ENCODE measurements at regions of chr7 and their contacts with region 1.

Region 1: GRCh38 chr7:134432296-134433152 is 26.4 kb downstream of the AKR1B1 start:
- DNase-seq: peak; percentile 83
- H3K4me3 ChIP-seq: peak overlapping the region; percentile 46
- H3K27ac ChIP-seq: peak overlapping the region; percentile 82
- H3K27me3 ChIP-seq: peaks cover 3% of the 10 kb centered on the region
- CTCF ChIP-seq: peak; percentile 74

Region 2: GRCh38 chr7:133853706-133854276 is 578.7 kb before region 1 on chr7:
- CTCF ChIA-PET with region 1: no interaction called
- POLR2A ChIA-PET with region 1: no interaction called
- DNase-seq: peak; percentile 61
- H3K4me3 ChIP-seq: no peak overlapping the region
- H3K27ac ChIP-seq: peak overlapping the region; percentile 85
- H3K27me3 ChIP-seq: no peaks in the 10 kb centered on the region
- CTCF ChIP-seq: peak; percentile 51

Region 3: DNA sequence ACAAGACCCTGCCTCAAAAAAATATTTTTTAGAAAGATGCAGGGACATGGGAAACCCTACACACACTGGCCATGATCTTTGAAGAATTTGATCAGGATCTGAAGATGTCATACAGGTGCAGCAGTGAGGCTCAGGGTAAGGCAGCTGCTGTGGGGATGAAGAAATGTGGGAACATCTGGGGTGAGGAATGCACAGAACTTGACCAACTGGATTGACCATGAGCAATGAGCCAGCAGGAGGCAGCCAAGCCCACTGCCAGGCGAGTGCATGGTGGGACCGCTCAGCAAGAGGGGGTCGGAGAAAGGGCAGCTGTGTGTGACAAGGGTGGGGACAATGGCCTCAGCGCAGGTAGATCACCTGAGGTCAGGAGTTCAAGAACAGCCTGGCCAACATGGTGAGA is 28.8 kb before region 1 on chr7:
- CTCF ChIA-PET with region 1: no interaction called
- POLR2A ChIA-PET with region 1: no interaction called
- DNase-seq: no peak
- H3K4me3 ChIP-seq: no peak overlapping the region
- H3K27ac ChIP-seq: no peak overlapping the region
- H3K27me3 ChIP-seq: peaks cover 2% of the 10 kb centered on the region
- CTCF ChIP-seq: no peak

Region 4: DNA sequence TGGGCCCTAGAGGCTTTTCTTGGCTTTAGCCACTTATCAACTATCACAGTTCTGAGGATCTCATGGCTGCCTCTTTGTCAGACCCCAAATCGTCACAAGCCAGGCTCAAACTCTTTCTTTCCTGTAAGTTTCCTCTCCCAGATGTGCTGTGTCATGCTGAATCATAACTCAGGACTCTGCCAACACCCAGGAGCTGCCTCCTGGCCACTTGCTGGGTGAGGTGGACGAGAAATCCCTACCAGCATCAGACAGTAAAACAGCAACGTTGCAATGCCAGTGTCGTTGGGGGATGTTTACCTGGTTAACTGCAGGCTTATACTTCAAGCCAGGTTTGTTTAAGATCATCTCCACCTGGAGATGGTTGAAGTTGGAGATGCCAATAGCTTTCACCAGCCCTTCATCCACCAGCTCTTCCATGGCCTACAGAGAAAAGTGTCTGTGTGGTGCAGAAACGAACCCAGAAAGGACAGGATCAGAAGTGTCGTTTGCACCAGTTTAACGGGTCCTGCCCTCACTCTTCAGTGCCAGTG is 16.2 kb after region 1 on chr7:
- CTCF ChIA-PET with region 1: interaction called, 40 read pairs
- POLR2A ChIA-PET with region 1: interaction called, 7 read pairs
- DNase-seq: peak; percentile 74
- H3K4me3 ChIP-seq: no peak overlapping the region
- H3K27ac ChIP-seq: peak overlapping the region; percentile 93
- H3K27me3 ChIP-seq: no peaks in the 10 kb centered on the region
- CTCF ChIP-seq: no peak

Region 5: GRCh38 chr7:134473861-134474291 is 41.4 kb after region 1 on chr7:
- CTCF ChIA-PET with region 1: interaction called, 59 read pairs
- POLR2A ChIA-PET with region 1: interaction called, 3 read pairs
- DNase-seq: no peak
- H3K4me3 ChIP-seq: no peak overlapping the region
- H3K27ac ChIP-seq: no peak overlapping the region
- H3K27me3 ChIP-seq: no peaks in the 10 kb centered on the region
- CTCF ChIP-seq: no peak

Region 6: DNA sequence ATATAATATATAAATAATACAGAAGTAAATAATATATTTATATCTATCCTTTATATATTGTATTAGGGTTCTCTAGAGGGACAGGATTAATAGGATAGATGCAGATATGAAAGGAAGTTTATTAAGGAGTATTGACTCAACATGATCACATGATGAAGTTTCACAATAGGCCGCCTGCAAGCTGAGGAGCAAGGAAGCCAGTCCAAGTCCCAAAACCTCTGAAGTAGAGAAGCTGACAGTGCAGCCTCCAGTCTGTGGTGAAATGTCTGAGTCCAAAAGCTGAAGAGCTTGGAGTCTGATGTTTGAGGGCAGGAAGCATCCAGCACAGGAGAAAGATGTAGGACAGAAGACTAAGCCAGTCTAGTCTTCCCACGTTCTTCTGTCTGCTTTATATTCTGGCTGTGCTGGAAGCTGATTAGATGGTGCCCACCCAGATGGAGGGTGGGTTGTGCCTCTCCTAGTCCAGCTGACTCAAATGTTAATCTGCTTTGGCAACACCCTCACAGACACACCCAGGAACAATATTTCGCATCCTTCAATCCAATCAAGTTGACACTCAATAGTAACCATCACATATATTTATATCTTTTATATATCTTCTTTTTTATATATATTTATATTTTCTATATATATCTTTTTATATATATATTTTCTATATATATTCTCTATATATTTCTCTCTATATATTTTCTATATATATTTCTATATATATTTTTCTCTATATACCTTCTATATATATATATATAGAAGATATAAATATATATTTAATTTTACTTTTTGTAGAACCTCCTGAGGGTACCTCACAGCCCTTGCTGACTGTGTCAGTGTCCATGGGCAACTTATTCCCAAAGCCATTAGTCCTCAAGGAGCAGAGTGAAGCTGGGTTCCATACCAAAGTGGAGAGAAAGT is 70.2 kb after region 1 on chr7:
- CTCF ChIA-PET with region 1: interaction called, 19 read pairs
- POLR2A ChIA-PET with region 1: no interaction called
- DNase-seq: no peak
- H3K4me3 ChIP-seq: no peak overlapping the region
- H3K27ac ChIP-seq: no peak overlapping the region
- H3K27me3 ChIP-seq: no peaks in the 10 kb centered on the region
- CTCF ChIP-seq: no peak

Region 7: GRCh38 chr7:134547397-134548054 is 115.0 kb after region 1 on chr7:
- CTCF ChIA-PET with region 1: interaction called, 73 read pairs
- POLR2A ChIA-PET with region 1: no interaction called
- DNase-seq: no peak
- H3K4me3 ChIP-seq: peak overlapping the region; percentile 65
- H3K27ac ChIP-seq: peak overlapping the region; percentile 21
- H3K27me3 ChIP-seq: peaks cover 21% of the 10 kb centered on the region
- CTCF ChIP-seq: peak; percentile 93

Region 8: GRCh38 chr7:134605973-134606923 is 173.7 kb after region 1 on chr7:
- CTCF ChIA-PET with region 1: interaction called, 82 read pairs
- POLR2A ChIA-PET with region 1: interaction called, 4 read pairs
- DNase-seq: no peak
- H3K4me3 ChIP-seq: no peak overlapping the region
- H3K27ac ChIP-seq: no peak overlapping the region
- H3K27me3 ChIP-seq: no peaks in the 10 kb centered on the region
- CTCF ChIP-seq: peak; percentile 95